MCF 10A (cell line): ENCODE measurements at regions of chr15 and their contacts with region 1.

Region 1: DNA sequence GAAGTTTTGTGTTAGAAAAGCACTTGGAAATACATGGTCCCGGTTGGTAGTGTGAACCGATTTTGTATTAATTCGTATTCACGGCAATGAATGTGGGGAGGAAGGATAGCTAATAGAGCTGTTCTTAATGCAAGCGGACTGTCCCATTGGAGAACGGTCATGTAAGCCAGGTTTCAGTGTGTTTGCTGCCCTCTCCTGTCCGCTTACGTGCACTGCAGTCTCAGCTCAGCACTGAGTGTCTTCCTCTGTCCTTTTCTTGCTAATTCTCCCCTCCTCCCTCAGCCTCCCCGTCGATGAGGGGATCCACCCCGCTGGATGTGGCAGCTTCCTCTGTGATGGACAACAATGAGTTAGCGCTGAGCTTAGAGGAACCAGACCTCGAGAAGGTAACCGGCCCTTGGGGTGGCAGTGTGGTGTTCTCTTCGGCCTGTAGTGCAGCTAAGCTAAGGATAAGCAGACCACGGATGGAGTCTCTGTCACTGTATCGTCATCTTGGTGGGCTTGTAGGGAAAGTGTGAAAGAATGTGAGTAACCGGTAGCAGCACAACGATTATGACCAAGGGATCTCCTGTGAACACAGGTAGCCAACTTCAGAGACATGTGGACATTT is 267.5 kb upstream of the CHRM5 start:
- DNase-seq: peak; percentile 79
- H3K4me3 Mint-ChIP-seq: no peak overlapping the region
- H3K27ac Mint-ChIP-seq: no peak overlapping the region
- H3K4me1 Mint-ChIP-seq: no peaks in the 10 kb centered on the region
- H3K27me3 Mint-ChIP-seq: peaks cover 15% of the 10 kb centered on the region
- CTCF ChIP-seq: peak; percentile 86

Region 2: DNA sequence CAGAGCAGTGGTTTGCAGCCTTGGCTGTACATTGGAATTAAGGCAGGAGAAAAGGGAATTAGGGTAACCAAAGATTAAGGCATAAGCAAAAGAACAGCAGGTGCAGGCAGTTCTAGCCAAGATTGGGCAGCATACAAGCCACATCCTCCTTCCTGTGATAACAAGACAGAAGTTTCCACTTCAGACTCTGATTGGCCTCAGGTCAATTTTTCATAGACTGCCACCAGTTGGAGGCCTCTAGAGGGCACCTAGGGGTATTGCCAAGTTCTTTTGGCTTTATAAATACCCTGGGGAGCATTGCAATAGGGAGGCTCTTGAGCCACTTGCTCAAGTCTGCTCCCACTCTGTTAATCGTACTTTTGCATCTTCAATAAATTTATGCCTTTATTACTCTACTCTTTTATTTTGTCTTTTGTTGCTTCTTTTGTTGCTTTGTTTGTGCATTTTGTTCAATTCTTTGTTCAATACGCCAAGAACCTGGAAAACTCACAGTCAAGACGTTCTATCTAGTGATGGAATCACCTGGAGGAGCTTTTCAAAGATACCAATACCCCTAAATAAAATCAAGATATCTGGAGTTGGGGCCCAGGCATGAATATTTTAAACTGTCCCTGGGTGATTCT is 474.1 kb before region 1 on chr15:
- CTCF ChIA-PET with region 1: interaction called, 34 read pairs
- POLR2A ChIA-PET with region 1: no interaction called
- intact Hi-C with region 1: no loop called
- DNase-seq: peak; percentile 65
- H3K4me3 Mint-ChIP-seq: no peak overlapping the region
- H3K27ac Mint-ChIP-seq: no peak overlapping the region
- H3K4me1 Mint-ChIP-seq: no peaks in the 10 kb centered on the region
- H3K27me3 Mint-ChIP-seq: peaks cover 14% of the 10 kb centered on the region
- CTCF ChIP-seq: peak; percentile 51

Region 3: GRCh38 chr15:33256874-33257273 is 443.9 kb before region 1 on chr15:
- CTCF ChIA-PET with region 1: interaction called, 17 read pairs
- POLR2A ChIA-PET with region 1: no interaction called
- intact Hi-C with region 1: no loop called
- DNase-seq: no peak
- H3K4me3 Mint-ChIP-seq: no peak overlapping the region
- H3K27ac Mint-ChIP-seq: no peak overlapping the region
- H3K4me1 Mint-ChIP-seq: no peaks in the 10 kb centered on the region
- H3K27me3 Mint-ChIP-seq: no peaks in the 10 kb centered on the region
- CTCF ChIP-seq: no peak

Region 4: DNA sequence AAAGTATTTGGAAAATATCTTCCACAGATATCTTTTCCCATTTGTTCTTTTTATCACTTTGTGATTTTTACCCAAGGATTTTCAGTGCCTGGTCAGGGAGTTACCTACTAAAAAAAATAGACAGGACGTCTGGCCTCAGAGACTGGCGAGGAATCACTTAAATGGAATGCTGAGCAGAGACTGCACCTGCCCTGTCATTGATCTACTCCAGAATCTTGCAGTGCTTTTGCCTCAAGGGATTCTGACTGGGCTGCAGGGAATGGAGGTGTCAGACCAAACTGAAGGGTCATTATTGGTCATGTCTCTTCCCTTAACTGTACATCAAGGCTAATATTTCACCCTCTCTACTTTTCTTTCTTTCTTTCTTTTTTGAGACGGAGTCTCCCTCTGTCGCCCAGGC is 402.2 kb before region 1 on chr15:
- CTCF ChIA-PET with region 1: interaction called, 194 read pairs
- POLR2A ChIA-PET with region 1: interaction called, 3 read pairs
- intact Hi-C with region 1: no loop called
- DNase-seq: peak; percentile 14
- H3K4me3 Mint-ChIP-seq: no peak overlapping the region
- H3K27ac Mint-ChIP-seq: no peak overlapping the region
- H3K4me1 Mint-ChIP-seq: peaks cover 18% of the 10 kb centered on the region
- H3K27me3 Mint-ChIP-seq: no peaks in the 10 kb centered on the region
- CTCF ChIP-seq: no peak

Region 5: DNA sequence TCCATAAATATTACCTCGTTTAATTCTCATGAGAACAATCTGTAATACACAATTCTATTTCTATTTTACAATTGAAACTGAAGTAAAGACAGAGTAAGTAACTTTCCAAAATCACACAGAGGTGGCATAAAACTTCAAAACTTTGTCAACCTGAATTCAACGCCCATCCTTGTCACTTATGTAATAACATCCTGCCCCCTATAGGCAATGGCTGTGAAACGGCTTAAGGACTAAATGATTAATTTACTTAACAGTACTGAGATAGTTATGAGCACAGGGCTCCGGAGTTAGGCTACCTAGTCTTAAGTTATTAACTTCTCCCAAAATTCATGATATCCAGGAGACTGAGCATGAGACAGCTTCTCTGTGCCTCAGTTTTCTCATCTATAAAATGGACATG is 25.6 kb before region 1 on chr15:
- CTCF ChIA-PET with region 1: interaction called, 16 read pairs
- POLR2A ChIA-PET with region 1: no interaction called
- intact Hi-C with region 1: no loop called
- DNase-seq: peak; percentile 54
- H3K4me3 Mint-ChIP-seq: no peak overlapping the region
- H3K27ac Mint-ChIP-seq: no peak overlapping the region
- H3K4me1 Mint-ChIP-seq: no peaks in the 10 kb centered on the region
- H3K27me3 Mint-ChIP-seq: peaks cover 77% of the 10 kb centered on the region
- CTCF ChIP-seq: peak; percentile 60